Activated T-helper 1 cell treated with anti-CD3 and anti-CD28 coated beads, Interleukin-12 subunit alpha, Interleukin-12 subunit beta, Interleukin-2, Interleukin-4 antibody, amounts not matched to agents 30 ng/mL and 10 ng/mL and 1 ng/mL, durations not matched to agents 14 hours and 24 hours and 36 hours (primary cell): ENCODE measurements at regions of chr19 and their contacts with region 1.

Region 1: DNA sequence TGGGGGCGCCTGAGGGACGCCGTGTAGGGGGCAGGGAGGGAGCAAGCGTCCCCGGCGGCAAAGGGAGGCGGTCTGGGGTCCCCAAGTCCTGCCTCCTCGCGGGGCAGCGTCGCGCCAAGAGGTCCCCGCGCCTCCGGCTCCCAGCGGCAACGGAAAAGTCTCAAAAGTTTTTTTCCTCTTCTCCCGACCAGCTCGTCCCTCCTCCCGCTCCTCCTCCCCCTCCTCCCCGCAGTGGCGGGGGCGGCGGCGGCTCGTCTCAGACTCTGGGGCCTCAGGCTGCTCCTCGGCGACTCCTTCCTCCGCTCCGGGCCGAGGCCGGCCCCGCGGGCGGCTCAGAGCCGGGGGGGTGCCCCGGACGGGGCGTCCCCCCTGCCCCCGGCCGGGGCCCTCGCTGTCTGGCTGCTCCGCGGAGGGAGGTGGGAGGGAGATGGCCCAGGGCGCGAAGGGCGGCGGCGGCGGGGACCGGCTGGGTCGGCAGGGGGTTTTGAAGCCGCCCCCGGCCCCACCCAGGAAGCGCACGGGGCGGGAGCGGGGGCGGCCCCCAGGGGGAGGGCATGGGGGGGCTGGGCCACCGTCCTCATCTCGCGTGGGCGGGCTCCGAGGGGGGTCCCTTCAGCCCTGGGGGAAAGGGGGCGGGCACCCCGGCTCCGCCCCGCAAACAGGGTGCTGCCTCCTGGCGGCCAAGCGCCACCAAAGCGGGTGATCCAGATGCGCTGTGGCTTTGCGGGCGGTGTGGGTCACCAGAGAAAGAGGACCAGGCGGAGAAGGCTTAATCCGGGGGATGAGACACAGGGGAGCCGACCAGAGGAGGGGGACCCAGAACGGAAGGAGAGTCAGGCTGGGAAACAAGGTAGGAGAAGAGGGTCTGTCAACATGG is at the start of gene TGFB1:
- DNase-seq: peak; percentile 90
- H3K4me3 Mint-ChIP-seq: peak within 1 kb of the TSS; percentile 95
- H3K27ac Mint-ChIP-seq: peak within 1 kb of the TSS; percentile 90
- H3K4me1 Mint-ChIP-seq: peaks cover 68% of the 10 kb centered on the region
- H3K27me3 Mint-ChIP-seq: no peaks in the 10 kb centered on the region
- total RNA-seq, gene TGFB1: 108 and 112 TPM in 2 replicates

Region 2: DNA sequence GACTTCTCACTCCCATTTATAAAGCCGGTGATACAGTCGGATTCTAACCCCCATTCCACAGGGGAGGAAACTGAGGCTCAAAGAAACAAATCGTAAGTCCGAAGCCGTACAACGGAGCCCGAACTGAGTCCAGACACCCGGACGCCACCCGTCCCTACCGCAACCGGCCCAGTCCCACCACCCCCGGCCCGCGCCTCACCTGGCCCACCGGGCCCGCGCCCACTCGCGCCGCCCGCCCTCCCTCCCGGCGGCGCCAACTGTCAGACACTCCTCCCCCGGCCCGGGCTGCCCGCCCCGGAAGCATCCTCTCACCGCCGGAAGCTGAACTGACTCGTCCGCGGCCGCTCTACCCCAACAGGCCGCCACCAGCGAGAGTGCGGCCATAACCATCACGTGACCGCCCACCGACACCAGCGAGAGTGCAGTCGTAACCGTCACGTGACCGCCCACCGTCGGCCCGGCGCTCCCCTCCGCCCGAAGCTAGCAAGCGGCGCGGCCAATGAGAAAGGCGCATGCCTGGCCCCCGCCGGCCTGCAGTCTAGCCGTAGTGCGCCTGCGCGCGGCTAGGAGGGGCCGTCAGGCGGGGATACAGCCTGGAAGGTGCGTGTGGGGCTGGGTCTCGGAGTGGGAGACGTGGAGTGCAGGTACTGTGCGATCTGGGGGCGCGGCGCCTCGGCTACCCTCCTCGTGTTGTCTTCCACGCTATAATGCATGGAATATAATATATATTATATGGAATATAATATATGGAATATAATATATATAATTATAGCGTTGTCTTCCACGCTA is 1005.4 kb before region 1 on chr19 and contains the starts of genes C19orf47 and PLD3:
- intact Hi-C with region 1: loop called (anchors 5 kb)
- DNase-seq: peak; percentile 99
- H3K4me3 Mint-ChIP-seq: peak within 1 kb of the TSS; percentile 97
- H3K27ac Mint-ChIP-seq: peak within 1 kb of the TSS; percentile 95
- H3K4me1 Mint-ChIP-seq: peaks cover 21% of the 10 kb centered on the region
- H3K27me3 Mint-ChIP-seq: peaks cover 2% of the 10 kb centered on the region
- total RNA-seq, gene C19orf47: 26.4 and 28.1 TPM in 2 replicates
- total RNA-seq, gene PLD3: 45.0 and 45.3 TPM in 2 replicates

Region 3: DNA sequence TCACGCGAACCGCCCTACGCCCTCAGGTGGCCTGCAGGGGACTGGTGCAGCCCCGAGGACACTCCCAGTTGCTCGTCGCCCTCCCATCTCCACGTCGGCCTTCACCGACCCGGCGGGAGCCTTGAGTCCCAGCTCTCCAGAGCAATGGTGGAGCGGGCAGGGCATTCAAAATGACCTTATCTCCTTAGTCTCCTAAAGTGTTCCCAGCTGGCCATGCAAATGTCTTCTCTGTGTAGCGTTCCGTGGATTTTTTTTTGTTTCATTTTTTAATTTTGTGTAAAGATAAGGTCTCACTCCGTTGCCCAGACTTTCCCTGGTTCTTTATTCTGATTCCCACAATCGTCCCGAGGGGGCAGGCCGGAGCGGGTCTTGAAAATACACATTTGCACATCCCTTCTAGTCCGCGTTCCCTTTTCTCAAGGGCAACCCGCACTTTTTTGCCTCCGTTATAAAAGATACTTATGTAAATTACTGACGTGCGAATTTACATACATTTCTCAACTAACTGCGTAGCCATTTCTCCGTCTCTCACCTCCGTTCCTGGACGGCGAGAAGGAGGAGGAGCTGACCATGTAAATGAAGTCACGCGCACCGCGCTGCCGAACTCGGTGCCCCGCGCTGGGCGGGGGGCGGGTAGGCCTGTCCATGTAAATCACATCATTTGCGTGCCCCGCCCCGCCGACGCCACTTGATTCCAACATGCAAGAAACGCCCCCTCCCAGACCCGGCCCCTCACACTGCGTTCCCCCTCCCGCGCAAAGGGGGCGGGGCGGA is 555.3 kb before region 1 on chr19:
- intact Hi-C with region 1: loop called (anchors 5 kb)
- DNase-seq: peak; percentile 100
- H3K4me3 Mint-ChIP-seq: peak overlapping the region; percentile 87
- H3K27ac Mint-ChIP-seq: peak overlapping the region; percentile 92
- H3K4me1 Mint-ChIP-seq: peaks cover 56% of the 10 kb centered on the region
- H3K27me3 Mint-ChIP-seq: no peaks in the 10 kb centered on the region

Region 4: GRCh38 chr19:41226053-41226873 is 127.4 kb before region 1 on chr19:
- intact Hi-C with region 1: no loop called
- DNase-seq: peak; percentile 23
- H3K4me3 Mint-ChIP-seq: peak overlapping the region; percentile 83
- H3K27ac Mint-ChIP-seq: peak overlapping the region; percentile 91
- H3K4me1 Mint-ChIP-seq: peaks cover 24% of the 10 kb centered on the region
- H3K27me3 Mint-ChIP-seq: peaks cover 9% of the 10 kb centered on the region

Region 5: GRCh38 chr19:41310033-41310758 is 43.5 kb before region 1 on chr19 and contains the start of gene CCDC97:
- intact Hi-C with region 1: loop called (anchors 1 kb)
- DNase-seq: peak; percentile 89
- H3K4me3 Mint-ChIP-seq: peak within 1 kb of the TSS; percentile 95
- H3K27ac Mint-ChIP-seq: peak within 1 kb of the TSS; percentile 94
- H3K4me1 Mint-ChIP-seq: peaks cover 65% of the 10 kb centered on the region
- H3K27me3 Mint-ChIP-seq: no peaks in the 10 kb centered on the region
- total RNA-seq, gene CCDC97: 35.3 and 36.1 TPM in 2 replicates

Region 6: DNA sequence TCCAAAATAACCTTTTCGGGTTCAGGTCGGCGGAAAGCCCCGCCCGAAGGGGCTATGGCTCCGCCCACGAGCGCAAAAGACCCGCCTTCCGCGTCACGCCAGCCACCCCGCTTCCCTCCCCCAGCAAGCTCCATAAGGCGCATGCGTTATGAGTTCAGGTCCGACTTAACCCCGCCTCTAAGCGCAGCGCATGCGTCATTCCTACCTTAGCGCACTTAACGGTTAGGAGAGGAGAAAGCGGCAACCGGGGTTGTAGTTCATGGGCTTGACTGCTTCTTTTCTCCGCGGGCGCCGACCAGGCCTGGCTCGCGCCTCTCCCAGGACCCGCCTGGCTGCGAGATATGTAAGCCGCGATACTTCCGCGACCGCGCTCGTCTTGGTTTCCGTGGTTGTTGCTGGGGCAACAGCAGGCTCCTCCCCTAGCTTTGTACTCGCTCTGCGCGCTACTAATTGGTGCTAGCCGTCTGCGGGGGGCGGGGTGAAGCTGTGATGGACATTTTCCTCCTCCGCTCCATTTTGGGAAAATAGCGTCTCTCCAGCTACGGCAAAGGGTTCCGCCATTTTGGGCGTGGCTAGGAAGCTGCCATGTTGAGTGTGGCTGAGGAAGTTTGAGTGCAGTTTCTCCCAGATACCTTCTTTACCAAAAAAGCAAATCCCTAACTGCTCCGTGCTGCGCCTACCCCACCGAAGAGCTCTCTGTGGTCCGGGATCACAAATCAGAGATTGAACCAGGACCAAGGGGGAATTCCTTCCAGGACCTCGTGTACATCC is 10.2 kb after region 1 on chr19 and contains the start of gene B9D2:
- intact Hi-C with region 1: loop called (anchors 1 kb)
- DNase-seq: peak; percentile 97
- H3K4me3 Mint-ChIP-seq: peak within 1 kb of the TSS; percentile 88
- H3K27ac Mint-ChIP-seq: peak within 1 kb of the TSS; percentile 98
- H3K4me1 Mint-ChIP-seq: peaks cover 30% of the 10 kb centered on the region
- H3K27me3 Mint-ChIP-seq: no peaks in the 10 kb centered on the region
- total RNA-seq, gene B9D2: 4.4 and 4.5 TPM in 2 replicates

Region 7: DNA sequence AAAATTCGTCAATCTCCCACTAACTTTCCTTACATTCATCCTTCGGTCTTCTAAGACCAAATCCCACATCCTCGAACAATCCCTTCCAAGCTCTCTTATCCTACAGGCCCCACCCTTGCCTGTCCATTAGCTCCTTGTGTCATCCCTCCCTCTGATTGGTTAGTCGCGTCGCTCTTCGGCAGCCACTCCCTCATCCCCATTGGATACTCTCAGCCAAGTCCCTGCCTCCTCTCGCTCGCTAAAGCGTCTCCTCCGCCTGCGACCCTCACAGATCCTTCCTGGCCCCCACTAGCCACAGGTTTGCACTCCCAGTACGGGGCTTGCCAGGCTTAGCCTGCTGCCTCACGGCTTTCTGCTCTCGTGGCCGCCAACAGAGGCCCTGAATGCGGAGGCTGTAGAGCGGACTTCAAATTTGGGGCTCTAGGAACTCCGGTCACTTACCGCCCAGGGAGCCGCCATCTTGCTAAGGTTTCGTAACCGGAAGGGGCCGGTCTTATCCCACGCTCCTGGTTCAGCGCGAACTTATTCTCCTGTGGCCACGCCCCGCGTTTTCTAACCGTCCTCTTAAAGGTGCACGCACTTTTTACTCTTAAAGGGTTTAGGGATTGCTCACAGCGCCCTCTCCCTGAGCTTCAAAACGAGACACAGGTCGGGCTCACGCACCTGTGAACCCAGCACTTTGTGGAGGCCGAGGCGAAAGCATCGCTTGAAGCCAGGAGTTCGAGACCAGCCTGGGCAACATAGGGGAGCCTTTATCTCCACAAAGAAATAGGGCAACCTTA is 85.9 kb after region 1 on chr19 and contains the start of gene DMAC2:
- intact Hi-C with region 1: loop called (anchors 1 kb)
- DNase-seq: peak; percentile 93
- H3K4me3 Mint-ChIP-seq: no peak within 1 kb of the TSS
- H3K27ac Mint-ChIP-seq: no peak within 1 kb of the TSS
- H3K4me1 Mint-ChIP-seq: peaks cover 5% of the 10 kb centered on the region
- H3K27me3 Mint-ChIP-seq: peaks cover 5% of the 10 kb centered on the region
- total RNA-seq, gene DMAC2: 56.7 and 57.3 TPM in 2 replicates

Region 8: DNA sequence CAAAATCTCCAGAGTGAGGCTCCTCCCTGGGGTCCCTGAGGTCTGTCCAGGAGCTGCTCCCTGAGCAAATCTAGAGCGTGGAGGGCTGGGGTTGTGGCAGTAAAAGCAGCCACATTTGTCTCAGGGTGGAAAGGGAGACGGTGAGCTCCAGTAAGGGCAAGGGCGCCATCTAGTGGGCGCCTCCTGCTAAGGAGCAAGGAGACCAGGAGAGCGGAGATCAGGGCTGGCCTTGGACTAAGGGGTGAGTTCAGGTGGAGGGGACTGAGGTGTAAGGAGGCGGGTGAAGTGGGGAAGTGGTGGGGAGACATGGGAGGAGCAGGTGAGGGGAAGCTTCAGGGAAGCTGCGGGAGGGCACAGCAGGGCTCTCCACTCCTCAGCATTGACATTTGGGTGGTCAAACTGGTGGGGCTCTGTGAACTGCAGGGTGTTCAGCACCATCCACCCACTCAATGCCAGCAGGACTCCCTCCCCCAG is 217.0 kb after region 1 on chr19:
- intact Hi-C with region 1: loop called (anchors 5 kb)
- DNase-seq: peak; percentile 76
- H3K4me3 Mint-ChIP-seq: no peak overlapping the region
- H3K27ac Mint-ChIP-seq: peak overlapping the region; percentile 27
- H3K4me1 Mint-ChIP-seq: peaks cover 27% of the 10 kb centered on the region
- H3K27me3 Mint-ChIP-seq: no peaks in the 10 kb centered on the region